Colonic mucosa (tissue), 4 donors: ENCODE measurements at regions of chr10 and their contacts with region 1.

Region 1: GRCh38 chr10:12710594-12711349 is 290.7 kb downstream of the CCDC3 start:
- DNase-seq: peak; percentile 81
- H3K4me3 ChIP-seq: no peak overlapping the region
- H3K27ac ChIP-seq: no peak overlapping the region
- H3K4me1 ChIP-seq: peaks cover 17% of the 10 kb centered on the region
- H3K27me3 ChIP-seq: no peaks in the 10 kb centered on the region
- CTCF ChIP-seq: peak; percentile 85

Region 2: DNA sequence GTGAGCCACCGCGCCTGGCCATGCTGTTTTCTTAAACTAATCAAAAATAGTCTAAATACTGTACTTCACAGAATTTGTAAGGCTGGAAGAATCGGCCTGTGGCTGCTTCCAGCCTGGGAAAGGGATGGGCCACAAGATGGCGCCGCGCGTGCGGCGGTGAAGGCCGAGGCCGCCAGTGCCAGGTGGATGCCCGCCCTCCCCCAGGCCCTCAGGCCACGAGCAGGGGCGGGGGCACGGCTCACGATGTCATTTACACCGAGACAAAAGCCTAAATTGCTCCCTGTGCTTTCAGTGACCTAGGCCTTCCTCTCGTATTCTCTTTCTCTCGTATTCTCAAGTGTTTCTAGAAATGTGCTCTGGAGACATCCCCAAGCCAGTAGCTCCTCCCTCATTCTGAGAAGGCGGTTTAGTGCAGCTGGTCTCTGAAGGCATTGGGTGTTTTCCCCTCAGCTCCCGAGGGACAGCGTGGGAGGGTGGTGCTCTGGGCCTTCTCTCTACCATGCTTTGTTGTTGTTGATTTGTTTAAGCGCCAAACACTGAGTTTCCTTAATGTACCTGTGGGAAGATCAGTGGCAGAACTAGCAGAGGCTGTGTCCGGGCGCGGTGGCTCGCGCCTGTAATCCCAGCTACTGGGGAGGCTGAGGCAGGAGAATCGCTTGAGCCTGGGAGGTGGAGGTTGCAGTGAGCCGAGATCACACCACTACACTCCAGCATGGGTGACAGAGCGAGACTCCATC is 446.4 kb before region 1 on chr10:
- intact Hi-C with region 1: loop called (anchors 2 kb)
- DNase-seq: peak; percentile 84
- H3K4me3 ChIP-seq: peak overlapping the region; percentile 33
- H3K27ac ChIP-seq: peak overlapping the region; percentile 4
- H3K4me1 ChIP-seq: peaks cover 4% of the 10 kb centered on the region
- H3K27me3 ChIP-seq: no peaks in the 10 kb centered on the region
- CTCF ChIP-seq: peak; percentile 76

Region 3: GRCh38 chr10:12656518-12657142 is 54.1 kb before region 1 on chr10:
- intact Hi-C with region 1: loop called (anchors 5 kb)
- DNase-seq: no peak
- H3K4me3 ChIP-seq: no peak overlapping the region
- H3K27ac ChIP-seq: no peak overlapping the region
- H3K4me1 ChIP-seq: no peaks in the 10 kb centered on the region
- H3K27me3 ChIP-seq: no peaks in the 10 kb centered on the region
- CTCF ChIP-seq: peak; percentile 60

Region 4: GRCh38 chr10:13074561-13075451 is 364.0 kb after region 1 on chr10:
- intact Hi-C with region 1: loop called (anchors 10 kb)
- DNase-seq: peak; percentile 71
- H3K4me3 ChIP-seq: no peak overlapping the region
- H3K27ac ChIP-seq: no peak overlapping the region
- H3K4me1 ChIP-seq: no peaks in the 10 kb centered on the region
- H3K27me3 ChIP-seq: no peaks in the 10 kb centered on the region
- CTCF ChIP-seq: peak; percentile 74